CD4-positive, alpha-beta memory T cell (primary cell): ENCODE measurements at regions of chr22 and their contacts with region 1.

Region 1: DNA sequence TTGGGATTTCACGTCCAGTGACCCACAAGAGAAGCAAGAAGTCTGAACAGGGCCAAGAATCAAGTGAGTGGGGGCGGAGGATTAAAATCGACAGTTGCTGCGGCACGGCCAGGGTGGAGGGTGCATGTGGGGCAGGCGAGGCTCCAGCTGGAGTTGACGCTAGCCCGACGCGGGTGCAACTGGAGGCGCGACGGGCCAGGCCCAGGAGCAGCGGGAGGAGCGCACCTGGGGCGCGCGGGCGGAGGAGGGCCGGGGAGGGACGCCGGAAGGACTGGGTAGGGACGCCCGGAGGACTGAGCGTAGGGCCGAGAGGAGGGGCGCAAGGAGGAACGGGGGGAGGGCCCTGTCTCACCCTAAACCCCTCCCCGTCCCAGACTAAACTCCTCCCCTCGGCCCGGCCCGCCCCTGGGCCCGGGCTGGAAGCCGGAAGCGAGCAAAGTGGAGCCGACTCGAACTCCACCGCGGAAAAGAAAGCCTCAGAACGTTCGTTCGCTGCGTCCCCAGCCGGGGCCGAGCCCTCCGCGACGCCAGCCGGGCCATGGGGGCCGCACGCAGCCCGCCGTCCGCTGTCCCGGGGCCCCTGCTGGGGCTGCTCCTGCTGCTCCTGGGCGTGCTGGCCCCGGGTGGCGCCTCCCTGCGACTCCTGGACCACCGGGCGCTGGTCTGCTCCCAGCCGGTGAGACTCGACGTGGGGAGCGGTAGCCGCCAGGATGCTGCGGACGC is at the start of gene IL17RA:
- DNase-seq: peak; percentile 92 to 97 (median 94)
- H3K4me3 ChIP-seq: peak within 1 kb of the TSS; percentile 58 to 86
- H3K4me3 Mint-ChIP-seq: peak within 1 kb of the TSS; percentile 88 to 99 (median 96)
- H3K27ac ChIP-seq: peak within 1 kb of the TSS; percentile 86
- H3K27ac Mint-ChIP-seq: peak within 1 kb of the TSS; percentile 93 to 97 (median 95)
- H3K4me1 ChIP-seq: peaks cover 47% of the 10 kb centered on the region
- H3K4me1 Mint-ChIP-seq: peaks cover 29 to 50% (median 41%) of the 10 kb centered on the region in 4 donors
- H3K27me3 ChIP-seq: no peaks in the 10 kb centered on the region
- H3K27me3 Mint-ChIP-seq: no peaks in the 10 kb centered on the region
- total RNA-seq, gene IL17RA: 71.6 to 77.2 TPM

Region 2: GRCh38 chr22:17095538-17095937 is 10.8 kb after region 1 on chr22:
- CTCF ChIA-PET with region 1: interaction called, 7 read pairs
- POLR2A ChIA-PET with region 1: interaction called, 75 read pairs
- intact Hi-C with region 1: loop called (anchors 1 kb)
- DNase-seq: no peak
- H3K4me3 ChIP-seq: no peak overlapping the region
- H3K4me3 Mint-ChIP-seq: peak overlapping the region in 3 of 8 donors; percentile 22 to 49 (median 33)
- H3K27ac ChIP-seq: no peak overlapping the region
- H3K27ac Mint-ChIP-seq: peak overlapping the region in 5 of 7 donors; percentile 55 to 86 (median 65)
- H3K4me1 ChIP-seq: peaks cover 94% of the 10 kb centered on the region
- H3K4me1 Mint-ChIP-seq: peaks cover 68 to 100% (median 84%) of the 10 kb centered on the region in 4 donors
- H3K27me3 ChIP-seq: no peaks in the 10 kb centered on the region
- H3K27me3 Mint-ChIP-seq: no peaks in the 10 kb centered on the region

Region 3: DNA sequence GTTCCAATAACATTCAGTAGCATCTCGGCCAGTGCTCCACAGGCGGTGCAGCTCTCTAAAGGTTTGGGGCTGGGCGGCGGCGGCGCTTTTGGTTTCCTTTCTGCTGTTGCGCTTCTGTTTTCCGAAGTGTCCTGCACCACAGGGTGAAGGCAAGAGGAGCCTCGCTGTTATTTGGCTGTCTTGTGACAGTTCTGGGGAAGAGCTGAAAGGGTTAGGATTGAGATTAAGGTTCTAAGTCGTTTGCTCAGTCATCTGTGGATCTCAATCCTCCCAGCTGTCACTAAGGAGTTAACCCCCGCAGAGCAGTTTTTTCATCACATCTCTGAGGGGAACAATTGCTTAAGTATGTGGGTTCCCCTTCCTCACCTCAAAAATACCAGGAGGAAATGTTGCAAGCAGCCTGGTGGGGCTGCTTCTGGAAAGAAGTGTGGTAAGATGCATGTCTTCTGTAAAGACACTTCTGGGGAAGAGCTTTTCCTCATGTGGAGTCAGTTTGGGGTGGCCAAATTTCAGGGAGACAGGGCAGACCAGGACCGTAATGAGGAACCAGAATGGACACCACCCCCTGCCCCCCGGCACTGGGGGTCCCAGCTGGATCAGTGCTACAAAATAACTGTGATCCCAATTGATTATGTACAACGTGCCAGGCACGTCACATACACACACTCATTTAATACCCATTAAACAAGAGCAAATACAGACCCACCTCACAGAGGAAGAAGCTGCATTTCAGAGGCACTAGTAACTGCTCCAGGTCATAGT is 22.3 kb after region 1 on chr22:
- CTCF ChIA-PET with region 1: interaction called, 4 read pairs
- POLR2A ChIA-PET with region 1: interaction called, 18 read pairs
- intact Hi-C with region 1: loop called (anchors 2 kb)
- DNase-seq: peak in 1 of 5 donors; percentile 17
- H3K4me3 ChIP-seq: no peak overlapping the region
- H3K4me3 Mint-ChIP-seq: peak overlapping the region; percentile 64 to 87 (median 72)
- H3K27ac ChIP-seq: no peak overlapping the region
- H3K27ac Mint-ChIP-seq: peak overlapping the region; percentile 73 to 85 (median 84)
- H3K4me1 ChIP-seq: peaks cover 28% of the 10 kb centered on the region
- H3K4me1 Mint-ChIP-seq: peaks cover 23 to 61% (median 43%) of the 10 kb centered on the region in 4 donors
- H3K27me3 ChIP-seq: no peaks in the 10 kb centered on the region
- H3K27me3 Mint-ChIP-seq: no peaks in the 10 kb centered on the region

Region 4: GRCh38 chr22:17121227-17122195 is 36.8 kb after region 1 on chr22 and contains the start of gene TMEM121B:
- CTCF ChIA-PET with region 1: interaction called, 15 read pairs
- POLR2A ChIA-PET with region 1: interaction called, 68 read pairs
- intact Hi-C with region 1: loop called (anchors 5 kb)
- DNase-seq: no peak
- H3K4me3 ChIP-seq: no peak within 1 kb of the TSS
- H3K4me3 Mint-ChIP-seq: peak within 1 kb of the TSS; percentile 51 to 74 (median 62)
- H3K27ac ChIP-seq: no peak within 1 kb of the TSS
- H3K27ac Mint-ChIP-seq: peak within 1 kb of the TSS in 1 of 7 donors; percentile 23
- H3K4me1 ChIP-seq: peaks cover 44% of the 10 kb centered on the region
- H3K4me1 Mint-ChIP-seq: peaks cover 25 to 39% (median 31%) of the 10 kb centered on the region in 4 donors
- H3K27me3 ChIP-seq: peaks cover 14% of the 10 kb centered on the region
- H3K27me3 Mint-ChIP-seq: peaks cover 8 to 15% of the 10 kb centered on the region in 2 donors
- total RNA-seq, gene TMEM121B: 0.12 TPM in 1 of 2 experiments, not detected in the other

Region 5: GRCh38 chr22:17158568-17159503 is 74.1 kb after region 1 on chr22 and contains the start of gene HDHD5:
- CTCF ChIA-PET with region 1: interaction called, 5 read pairs
- POLR2A ChIA-PET with region 1: interaction called, 58 read pairs
- intact Hi-C with region 1: loop called (anchors 1 kb)
- DNase-seq: peak; percentile 81 to 87 (median 85)
- H3K4me3 ChIP-seq: peak within 1 kb of the TSS; percentile 52 to 81
- H3K4me3 Mint-ChIP-seq: peak within 1 kb of the TSS; percentile 84 to 90 (median 88)
- H3K27ac ChIP-seq: peak within 1 kb of the TSS; percentile 46
- H3K27ac Mint-ChIP-seq: peak within 1 kb of the TSS; percentile 77 to 88 (median 85)
- H3K4me1 ChIP-seq: peaks cover 36% of the 10 kb centered on the region
- H3K4me1 Mint-ChIP-seq: peaks cover 17 to 48% (median 24%) of the 10 kb centered on the region in 4 donors
- H3K27me3 ChIP-seq: no peaks in the 10 kb centered on the region
- H3K27me3 Mint-ChIP-seq: no peaks in the 10 kb centered on the region
- total RNA-seq, gene HDHD5: 23.1 to 23.3 TPM

Region 6: GRCh38 chr22:17638432-17639246 is 553.9 kb after region 1 on chr22 and contains the start of gene BCL2L13:
- CTCF ChIA-PET with region 1: no interaction called
- POLR2A ChIA-PET with region 1: no interaction called
- intact Hi-C with region 1: loop called (anchors 1 kb)
- DNase-seq: peak; percentile 86 to 91 (median 89)
- H3K4me3 ChIP-seq: peak within 1 kb of the TSS; percentile 71 to 87
- H3K4me3 Mint-ChIP-seq: peak within 1 kb of the TSS; percentile 89 to 93 (median 92)
- H3K27ac ChIP-seq: peak within 1 kb of the TSS; percentile 98
- H3K27ac Mint-ChIP-seq: peak within 1 kb of the TSS; percentile 94 to 99 (median 98)
- H3K4me1 ChIP-seq: peaks cover 23% of the 10 kb centered on the region
- H3K4me1 Mint-ChIP-seq: peaks cover 17 to 45% (median 23%) of the 10 kb centered on the region in 4 donors
- H3K27me3 ChIP-seq: no peaks in the 10 kb centered on the region
- H3K27me3 Mint-ChIP-seq: no peaks in the 10 kb centered on the region
- total RNA-seq, gene BCL2L13: 28.3 to 32.6 TPM